Caco-2 (cell line): ENCODE measurements at regions of chr4 and their contacts with region 1.

Region 1: GRCh38 chr4:153466081-153466948 is at the start of gene TMEM131L:
- DNase-seq: peak; percentile 77 to 78
- H3K4me3 ChIP-seq: peak within 1 kb of the TSS; percentile 62
- H3K4me3 Mint-ChIP-seq: peak within 1 kb of the TSS; percentile 90
- H3K27ac Mint-ChIP-seq: peak within 1 kb of the TSS; percentile 73
- H3K4me1 ChIP-seq: peaks cover 14% of the 10 kb centered on the region
- H3K4me1 Mint-ChIP-seq: no peaks in the 10 kb centered on the region
- H3K27me3 ChIP-seq: no peaks in the 10 kb centered on the region
- H3K27me3 Mint-ChIP-seq: no peaks in the 10 kb centered on the region
- CTCF ChIP-seq: peak in 1 of 2 experiments; percentile 8
- total RNA-seq, gene TMEM131L: 20.8 and 20.9 TPM in 2 replicates

Region 2: DNA sequence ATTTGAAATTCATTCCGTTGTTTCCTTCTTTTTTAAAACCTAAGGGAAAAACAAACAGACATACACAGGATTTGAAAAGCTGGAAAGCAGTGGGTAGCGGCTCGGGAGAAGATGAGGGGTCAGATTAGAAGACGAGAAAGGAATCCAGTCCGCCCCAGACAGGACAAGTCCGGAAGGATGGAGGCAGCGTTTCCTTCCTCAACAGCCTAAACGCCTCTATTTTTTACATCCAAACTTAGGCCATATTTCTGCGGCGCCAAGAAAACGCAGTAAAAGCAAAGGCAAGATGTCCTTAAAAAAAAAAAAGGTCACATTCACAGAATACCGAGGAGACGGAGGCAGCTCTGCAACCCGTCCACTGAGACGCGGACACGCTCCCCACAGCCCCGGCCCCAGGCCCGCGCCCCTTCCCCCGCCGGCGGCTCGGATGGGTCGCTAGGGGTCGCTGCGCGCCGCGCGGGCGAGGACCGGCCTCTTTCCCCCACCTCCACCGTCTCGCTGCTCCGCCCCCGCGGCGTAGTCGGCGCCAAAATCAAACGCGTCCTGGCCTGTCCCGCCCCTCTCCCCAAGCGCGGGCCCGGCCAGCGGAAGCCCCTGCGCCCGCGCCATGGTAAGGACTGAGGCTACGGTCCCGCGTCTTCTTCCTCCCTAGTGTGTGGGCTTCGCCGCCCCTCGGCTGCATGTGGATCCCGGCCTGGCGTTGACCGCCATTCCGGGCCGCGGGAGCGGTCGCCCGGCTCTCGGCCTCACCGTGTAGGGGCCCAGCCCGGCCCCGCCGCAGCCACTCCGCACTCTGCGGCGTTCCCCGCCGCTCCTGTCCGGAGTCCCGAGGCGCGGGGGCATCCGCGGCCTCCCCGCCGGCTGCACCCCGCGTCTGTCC is 121.9 kb before region 1 on chr4 and contains the start of gene MND1:
- CTCF ChIA-PET with region 1: no interaction called
- POLR2A ChIA-PET with region 1: no interaction called
- intact Hi-C with region 1: loop called (anchors 1 kb)
- DNase-seq: peak; percentile 89 to 94
- H3K4me3 ChIP-seq: peak within 1 kb of the TSS; percentile 88
- H3K4me3 Mint-ChIP-seq: peak within 1 kb of the TSS; percentile 81
- H3K27ac Mint-ChIP-seq: peak within 1 kb of the TSS; percentile 82
- H3K4me1 ChIP-seq: peaks cover 17% of the 10 kb centered on the region
- H3K4me1 Mint-ChIP-seq: peaks cover 20% of the 10 kb centered on the region
- H3K27me3 ChIP-seq: no peaks in the 10 kb centered on the region
- H3K27me3 Mint-ChIP-seq: no peaks in the 10 kb centered on the region
- CTCF ChIP-seq: peak; percentile 62 to 95
- total RNA-seq, gene MND1: 19.8 and 21.8 TPM in 2 replicates

Region 3: DNA sequence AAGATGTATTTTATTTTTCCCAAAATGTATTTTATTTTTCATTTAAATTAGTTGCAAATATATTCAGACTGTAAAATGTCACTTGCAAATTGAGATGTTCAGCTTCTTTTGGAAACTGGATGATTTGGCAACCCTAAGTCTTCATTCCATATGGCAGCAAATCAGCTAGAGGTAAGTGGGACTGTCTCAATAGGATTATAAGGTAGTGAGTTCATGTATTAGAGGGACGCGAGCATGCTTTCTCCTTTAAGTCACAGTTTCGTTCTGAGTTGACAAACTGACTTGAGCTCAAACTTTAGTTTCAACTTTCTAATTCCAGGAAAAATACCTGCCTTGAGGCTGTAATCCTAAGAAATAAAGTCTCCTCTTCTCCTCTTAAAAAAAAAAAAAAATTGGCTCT is 44.4 kb before region 1 on chr4:
- CTCF ChIA-PET with region 1: no interaction called
- POLR2A ChIA-PET with region 1: no interaction called
- intact Hi-C with region 1: no loop called
- DNase-seq: no peak
- H3K4me3 ChIP-seq: no peak overlapping the region
- H3K4me3 Mint-ChIP-seq: no peak overlapping the region
- H3K27ac Mint-ChIP-seq: no peak overlapping the region
- H3K4me1 ChIP-seq: no peaks in the 10 kb centered on the region
- H3K4me1 Mint-ChIP-seq: no peaks in the 10 kb centered on the region
- H3K27me3 ChIP-seq: no peaks in the 10 kb centered on the region
- H3K27me3 Mint-ChIP-seq: no peaks in the 10 kb centered on the region
- CTCF ChIP-seq: no peak

Region 4: GRCh38 chr4:153432968-153433753 is 33.2 kb before region 1 on chr4:
- CTCF ChIA-PET with region 1: no interaction called
- POLR2A ChIA-PET with region 1: interaction called, 4 read pairs
- intact Hi-C with region 1: loop called (anchors 2 kb)
- DNase-seq: peak; percentile 69 to 73
- H3K4me3 ChIP-seq: no peak overlapping the region
- H3K4me3 Mint-ChIP-seq: no peak overlapping the region
- H3K27ac Mint-ChIP-seq: peak overlapping the region; percentile 6
- H3K4me1 ChIP-seq: no peaks in the 10 kb centered on the region; the same call in 1 of the 2 replicates
- H3K4me1 Mint-ChIP-seq: peaks cover 7% of the 10 kb centered on the region
- H3K27me3 ChIP-seq: no peaks in the 10 kb centered on the region
- H3K27me3 Mint-ChIP-seq: no peaks in the 10 kb centered on the region
- CTCF ChIP-seq: peak; percentile 37 to 67

Region 5: GRCh38 chr4:153486281-153487151 is 20.2 kb after region 1 on chr4:
- CTCF ChIA-PET with region 1: interaction called, 21 read pairs
- POLR2A ChIA-PET with region 1: interaction called, 17 read pairs
- intact Hi-C with region 1: loop called (anchors 1 kb)
- DNase-seq: peak; percentile 71 to 77
- H3K4me3 ChIP-seq: no peak overlapping the region
- H3K4me3 Mint-ChIP-seq: peak overlapping the region; percentile 47
- H3K27ac Mint-ChIP-seq: peak overlapping the region; percentile 73
- H3K4me1 ChIP-seq: peaks cover 32% of the 10 kb centered on the region
- H3K4me1 Mint-ChIP-seq: peaks cover 25% of the 10 kb centered on the region
- H3K27me3 ChIP-seq: no peaks in the 10 kb centered on the region
- H3K27me3 Mint-ChIP-seq: no peaks in the 10 kb centered on the region
- CTCF ChIP-seq: no peak

Region 6: GRCh38 chr4:153509724-153510123 is 43.4 kb after region 1 on chr4:
- CTCF ChIA-PET with region 1: no interaction called
- POLR2A ChIA-PET with region 1: interaction called, 11 read pairs
- intact Hi-C with region 1: no loop called
- DNase-seq: peak in 1 of 2 experiments; percentile 52
- H3K4me3 ChIP-seq: no peak overlapping the region
- H3K4me3 Mint-ChIP-seq: peak overlapping the region; percentile 40
- H3K27ac Mint-ChIP-seq: peak overlapping the region; percentile 56
- H3K4me1 ChIP-seq: peaks cover 84% of the 10 kb centered on the region
- H3K4me1 Mint-ChIP-seq: peaks cover 37% of the 10 kb centered on the region
- H3K27me3 ChIP-seq: no peaks in the 10 kb centered on the region
- H3K27me3 Mint-ChIP-seq: no peaks in the 10 kb centered on the region
- CTCF ChIP-seq: no peak

Region 7: GRCh38 chr4:153521999-153522801 is 55.9 kb after region 1 on chr4:
- CTCF ChIA-PET with region 1: interaction called, 4 read pairs
- POLR2A ChIA-PET with region 1: interaction called, 5 read pairs
- intact Hi-C with region 1: loop called (anchors 2 kb)
- DNase-seq: no peak
- H3K4me3 ChIP-seq: no peak overlapping the region
- H3K4me3 Mint-ChIP-seq: no peak overlapping the region
- H3K27ac Mint-ChIP-seq: peak overlapping the region; percentile 34
- H3K4me1 ChIP-seq: peaks cover 71% of the 10 kb centered on the region
- H3K4me1 Mint-ChIP-seq: peaks cover 53% of the 10 kb centered on the region
- H3K27me3 ChIP-seq: no peaks in the 10 kb centered on the region
- H3K27me3 Mint-ChIP-seq: no peaks in the 10 kb centered on the region
- CTCF ChIP-seq: no peak

Region 8: GRCh38 chr4:153564630-153565525 is 98.6 kb after region 1 on chr4:
- CTCF ChIA-PET with region 1: interaction called, 10 read pairs
- POLR2A ChIA-PET with region 1: interaction called, 5 read pairs
- intact Hi-C with region 1: no loop called
- DNase-seq: peak; percentile 73
- H3K4me3 ChIP-seq: no peak overlapping the region
- H3K4me3 Mint-ChIP-seq: peak overlapping the region; percentile 41
- H3K27ac Mint-ChIP-seq: peak overlapping the region; percentile 58
- H3K4me1 ChIP-seq: peaks cover 49% of the 10 kb centered on the region
- H3K4me1 Mint-ChIP-seq: peaks cover 15% of the 10 kb centered on the region
- H3K27me3 ChIP-seq: no peaks in the 10 kb centered on the region
- H3K27me3 Mint-ChIP-seq: no peaks in the 10 kb centered on the region
- CTCF ChIP-seq: no peak